ENCODE measurements at regions of chr6 and their contacts with region 1.

Region 1: GRCh38 chr6:56292505-56293181 is 45.3 kb upstream of the COL21A1 start:
- DNase-seq: peak; percentile 39 to 67
- ATAC-seq: peak; percentile 84 to 89
- H3K4me3 ChIP-seq: no peak overlapping the region
- H3K27ac ChIP-seq: peak overlapping the region in 1 of 2 experiments; percentile 53; a peak in 2 of 6 replicates
- H3K4me1 ChIP-seq: peaks cover 8% of the 10 kb centered on the region
- CTCF ChIP-seq: peak; percentile 85
- EP300 ChIP-seq: no peak
- POLR2A ChIP-seq: no peak
- RAD21 ChIP-seq: peak; percentile 90 to 95

Region 2: GRCh38 chr6:55980627-55981211 is 311.9 kb before region 1 on chr6:
- CTCF ChIA-PET with region 1: interaction called, 41 read pairs
- POLR2A ChIA-PET with region 1: no interaction called
- DNase-seq: peak; percentile 4 to 25
- ATAC-seq: no peak
- H3K4me3 ChIP-seq: no peak overlapping the region
- H3K27ac ChIP-seq: no peak overlapping the region
- H3K4me1 ChIP-seq: no peaks in the 10 kb centered on the region
- CTCF ChIP-seq: peak; percentile 81
- EP300 ChIP-seq: no peak
- POLR2A ChIP-seq: no peak
- RAD21 ChIP-seq: peak; percentile 88 to 94

Region 3: DNA sequence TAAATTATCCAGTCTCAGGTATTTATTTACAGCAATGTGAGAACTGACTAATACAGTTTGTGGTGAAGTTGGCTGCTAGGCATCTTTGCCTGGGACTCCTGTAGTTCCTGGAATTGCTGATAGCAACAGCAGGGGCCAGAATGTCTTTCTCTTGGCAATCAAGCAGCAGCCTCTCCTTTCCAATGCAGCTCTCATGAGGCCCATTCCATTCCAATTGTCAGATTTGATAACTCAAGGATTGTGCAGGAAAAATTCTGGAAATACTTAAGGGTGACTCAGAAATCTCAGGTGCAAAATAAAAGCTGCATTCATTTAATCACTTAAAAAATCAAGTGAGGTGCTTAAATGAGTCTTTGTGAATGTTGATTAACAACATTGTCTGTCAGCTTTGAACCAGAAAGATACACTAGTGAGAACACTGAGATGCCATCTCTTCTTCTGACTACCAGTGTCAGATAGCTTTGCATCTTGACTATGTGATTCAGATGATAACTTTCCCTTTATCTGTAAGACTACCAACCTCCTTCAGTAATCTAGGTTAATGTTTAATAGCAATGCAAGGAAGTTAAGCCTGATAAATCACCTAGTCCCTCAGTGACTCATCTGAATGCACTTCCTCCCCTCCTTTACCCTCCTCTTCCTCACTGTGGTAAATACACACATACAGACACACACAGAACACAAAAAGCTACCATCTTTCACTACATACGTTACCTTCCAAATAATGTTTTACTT is 13.1 kb before region 1 on chr6:
- CTCF ChIA-PET with region 1: interaction called, 14 read pairs
- POLR2A ChIA-PET with region 1: no interaction called
- DNase-seq: peak; percentile 70 to 84
- ATAC-seq: peak; percentile 95 to 97
- H3K4me3 ChIP-seq: no peak overlapping the region
- H3K27ac ChIP-seq: peak overlapping the region; percentile 78 to 85
- H3K4me1 ChIP-seq: peaks cover 32% of the 10 kb centered on the region
- CTCF ChIP-seq: no peak
- EP300 ChIP-seq: no peak
- POLR2A ChIP-seq: no peak
- RAD21 ChIP-seq: peak; percentile 9 to 20; a peak in 1 of 5 replicates

Region 4: GRCh38 chr6:56311061-56311460 is 18.4 kb after region 1 on chr6:
- CTCF ChIA-PET with region 1: no interaction called
- POLR2A ChIA-PET with region 1: no interaction called
- DNase-seq: no peak
- ATAC-seq: no peak
- H3K4me3 ChIP-seq: no peak overlapping the region
- H3K27ac ChIP-seq: no peak overlapping the region
- H3K4me1 ChIP-seq: no peaks in the 10 kb centered on the region
- CTCF ChIP-seq: no peak
- EP300 ChIP-seq: no peak
- POLR2A ChIP-seq: no peak
- RAD21 ChIP-seq: no peak

Region 5: DNA sequence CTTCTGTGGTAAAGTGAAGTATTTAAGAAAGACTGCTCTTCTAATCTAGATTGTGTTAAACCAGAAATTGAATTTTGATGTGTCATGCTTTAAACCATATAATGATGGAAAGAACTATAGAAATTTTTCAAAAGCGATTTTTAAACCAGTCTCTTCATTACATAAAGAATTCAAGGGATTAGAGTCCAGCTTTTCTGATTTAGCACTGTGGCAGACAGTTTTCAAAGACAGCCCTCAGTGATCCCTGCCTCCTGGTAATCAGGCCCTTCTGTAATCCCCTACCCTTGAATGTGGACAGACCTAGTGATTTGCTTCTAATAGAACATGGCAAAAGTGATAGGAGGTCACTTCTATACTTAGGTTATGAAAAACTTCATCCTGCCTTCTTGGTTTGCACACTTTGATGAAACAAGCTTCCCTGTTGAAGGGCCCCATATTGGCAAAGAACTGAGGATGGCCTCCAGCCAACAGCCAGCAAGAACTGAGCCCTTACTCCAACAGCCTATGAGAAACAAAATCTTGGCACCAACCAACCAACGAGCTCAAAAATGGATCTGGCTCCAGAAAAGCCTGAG is 158.6 kb after region 1 on chr6:
- CTCF ChIA-PET with region 1: no interaction called
- POLR2A ChIA-PET with region 1: no interaction called
- DNase-seq: no peak
- ATAC-seq: no peak
- H3K4me3 ChIP-seq: no peak overlapping the region
- H3K27ac ChIP-seq: no peak overlapping the region
- H3K4me1 ChIP-seq: no peaks in the 10 kb centered on the region
- CTCF ChIP-seq: no peak
- EP300 ChIP-seq: no peak
- POLR2A ChIP-seq: no peak
- RAD21 ChIP-seq: no peak